ENCODE measurements at regions of chr12 and their contacts with region 1.

Region 1: DNA sequence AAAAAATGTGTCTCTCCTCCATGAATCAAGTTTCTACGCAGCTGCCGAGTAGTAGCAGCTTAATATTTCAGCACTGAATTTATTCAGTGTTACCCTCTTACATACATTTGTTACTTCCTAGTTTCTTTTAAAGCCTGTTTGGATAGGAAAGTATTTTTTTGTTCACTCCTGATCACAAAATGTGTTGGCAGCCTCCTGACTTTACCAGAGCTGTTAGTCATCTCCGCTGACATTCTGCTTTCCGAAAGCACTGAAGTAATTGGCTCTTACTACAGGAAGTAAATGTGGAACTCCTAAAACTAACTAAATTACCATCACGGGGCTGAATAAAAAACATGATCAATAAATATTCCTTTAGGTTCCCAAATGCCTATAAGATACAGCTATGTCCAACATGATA is 225.5 kb downstream of the EPS8 start:
- DNase-seq: peak; percentile 32
- H3K4me3 Mint-ChIP-seq: peak overlapping the region; percentile 64
- H3K27ac Mint-ChIP-seq: peak overlapping the region; percentile 94
- H3K4me1 Mint-ChIP-seq: peaks cover 62% of the 10 kb centered on the region
- H3K27me3 Mint-ChIP-seq: no peaks in the 10 kb centered on the region

Region 2: GRCh38 chr12:15404485-15404884 is 159.2 kb before region 1 on chr12:
- CTCF ChIA-PET with region 1: no interaction called
- POLR2A ChIA-PET with region 1: no interaction called
- DNase-seq: no peak
- H3K4me3 Mint-ChIP-seq: no peak overlapping the region
- H3K27ac Mint-ChIP-seq: no peak overlapping the region
- H3K4me1 Mint-ChIP-seq: no peaks in the 10 kb centered on the region
- H3K27me3 Mint-ChIP-seq: peaks cover 6% of the 10 kb centered on the region

Region 3: DNA sequence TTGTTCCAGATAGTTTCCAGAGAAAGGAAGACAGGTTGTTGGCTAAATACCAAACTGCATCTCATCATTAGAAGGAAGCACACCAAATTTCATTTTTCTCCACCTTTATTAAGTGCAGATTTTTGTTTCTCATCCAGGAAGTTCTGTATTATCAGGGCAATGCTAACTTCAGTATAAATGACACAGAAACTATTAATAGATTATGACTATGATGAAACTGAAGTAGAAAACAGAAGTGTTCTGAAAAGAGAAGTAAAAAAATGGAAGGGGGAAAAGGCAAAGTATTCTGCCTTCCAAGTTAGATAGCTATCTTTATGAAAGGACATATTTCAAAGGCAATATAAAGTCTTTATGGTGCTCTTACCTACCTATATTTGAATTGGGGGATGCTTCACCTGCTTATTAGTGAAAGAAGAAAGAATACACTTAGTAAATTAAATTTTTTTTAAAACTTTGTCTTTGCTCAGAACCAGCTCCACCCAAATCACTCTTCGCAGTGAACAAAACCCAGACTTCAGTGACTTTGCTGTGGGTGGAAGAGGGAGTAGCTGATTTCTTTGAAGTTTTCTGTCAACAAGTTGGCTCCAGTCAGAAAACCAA is 17.5 kb before region 1 on chr12:
- CTCF ChIA-PET with region 1: interaction called, 7 read pairs
- POLR2A ChIA-PET with region 1: interaction called, 26 read pairs
- DNase-seq: no peak
- H3K4me3 Mint-ChIP-seq: no peak overlapping the region
- H3K27ac Mint-ChIP-seq: peak overlapping the region; percentile 63
- H3K4me1 Mint-ChIP-seq: peaks cover 19% of the 10 kb centered on the region
- H3K27me3 Mint-ChIP-seq: peaks cover 2% of the 10 kb centered on the region

Region 4: GRCh38 chr12:15644700-15645099 is 81.0 kb after region 1 on chr12:
- CTCF ChIA-PET with region 1: no interaction called
- POLR2A ChIA-PET with region 1: no interaction called
- DNase-seq: no peak
- H3K4me3 Mint-ChIP-seq: no peak overlapping the region
- H3K27ac Mint-ChIP-seq: no peak overlapping the region
- H3K4me1 Mint-ChIP-seq: no peaks in the 10 kb centered on the region
- H3K27me3 Mint-ChIP-seq: no peaks in the 10 kb centered on the region